Endothelial cell of umbilical vein (primary cell): ENCODE measurements at regions of chr17 and their contacts with region 1.

Region 1: DNA sequence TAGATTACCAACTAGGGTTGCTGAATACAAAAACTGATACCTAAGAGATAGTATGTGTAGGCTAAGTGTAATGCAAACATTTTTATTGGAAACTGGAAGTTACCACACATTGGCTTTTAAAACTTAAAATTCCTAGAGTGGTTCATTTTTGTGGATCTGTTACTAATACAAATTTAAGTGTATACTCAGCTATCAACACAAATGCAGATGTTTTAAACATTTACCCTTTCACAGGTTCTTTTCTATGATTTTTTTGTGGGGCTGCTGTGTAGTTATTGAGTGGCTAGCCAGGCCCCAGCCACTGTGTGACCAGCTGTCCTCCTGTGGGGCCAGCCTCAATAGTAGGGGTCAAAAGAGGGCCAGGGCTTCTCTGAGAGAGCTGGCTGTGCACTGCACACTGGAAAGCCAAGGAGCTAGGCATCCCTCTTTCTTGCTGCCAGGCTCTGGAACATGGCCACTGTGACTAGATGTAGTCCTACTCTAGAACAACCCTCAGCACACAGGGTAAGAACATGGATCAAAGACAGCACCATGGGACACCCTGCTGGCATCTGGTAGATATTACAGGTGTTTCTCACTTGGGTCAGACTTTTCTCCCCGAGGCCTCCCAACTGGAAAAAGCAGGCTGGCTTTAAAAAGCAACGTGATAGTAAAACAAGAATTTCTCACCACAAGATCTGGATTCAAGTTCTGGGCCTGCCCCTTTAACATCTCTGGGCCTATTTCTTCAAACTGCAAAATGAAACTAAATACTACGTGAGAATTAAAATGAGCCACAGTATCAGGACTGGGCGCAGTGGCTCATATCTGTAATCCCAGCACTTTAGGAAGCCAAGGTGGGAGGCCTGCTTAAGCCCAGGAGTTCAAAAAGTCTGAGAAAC is 7.3 kb upstream of the VEZF1 start:
- DNase-seq: peak; percentile 82
- H3K4me3 ChIP-seq: no peak overlapping the region
- H3K27ac ChIP-seq: no peak overlapping the region
- H3K4me1 ChIP-seq: peaks cover 20% of the 10 kb centered on the region
- H3K27me3 ChIP-seq: no peaks in the 10 kb centered on the region
- CTCF ChIP-seq: peak; percentile 71 to 72
- POLR2A ChIP-seq: no peak

Region 2: GRCh38 chr17:57255776-57256681 is 739.3 kb before region 1 on chr17 and contains the start of gene MSI2:
- CTCF ChIA-PET with region 1: no interaction called
- POLR2A ChIA-PET with region 1: no interaction called
- dilution Hi-C with region 1: no loop called
- intact Hi-C with region 1: loop called (anchors 5 kb)
- DNase-seq: peak; percentile 59
- H3K4me3 ChIP-seq: peak within 1 kb of the TSS; percentile 85 to 99 (median 97)
- H3K27ac ChIP-seq: peak within 1 kb of the TSS; percentile 21
- H3K4me1 ChIP-seq: peaks cover 12% of the 10 kb centered on the region
- H3K27me3 ChIP-seq: peaks cover 0 to 2% of the 10 kb centered on the region in 2 experiments
- CTCF ChIP-seq: no peak
- POLR2A ChIP-seq: no peak
- total RNA-seq, gene MSI2: 59.3 and 62.7 TPM in 2 replicates

Region 3: DNA sequence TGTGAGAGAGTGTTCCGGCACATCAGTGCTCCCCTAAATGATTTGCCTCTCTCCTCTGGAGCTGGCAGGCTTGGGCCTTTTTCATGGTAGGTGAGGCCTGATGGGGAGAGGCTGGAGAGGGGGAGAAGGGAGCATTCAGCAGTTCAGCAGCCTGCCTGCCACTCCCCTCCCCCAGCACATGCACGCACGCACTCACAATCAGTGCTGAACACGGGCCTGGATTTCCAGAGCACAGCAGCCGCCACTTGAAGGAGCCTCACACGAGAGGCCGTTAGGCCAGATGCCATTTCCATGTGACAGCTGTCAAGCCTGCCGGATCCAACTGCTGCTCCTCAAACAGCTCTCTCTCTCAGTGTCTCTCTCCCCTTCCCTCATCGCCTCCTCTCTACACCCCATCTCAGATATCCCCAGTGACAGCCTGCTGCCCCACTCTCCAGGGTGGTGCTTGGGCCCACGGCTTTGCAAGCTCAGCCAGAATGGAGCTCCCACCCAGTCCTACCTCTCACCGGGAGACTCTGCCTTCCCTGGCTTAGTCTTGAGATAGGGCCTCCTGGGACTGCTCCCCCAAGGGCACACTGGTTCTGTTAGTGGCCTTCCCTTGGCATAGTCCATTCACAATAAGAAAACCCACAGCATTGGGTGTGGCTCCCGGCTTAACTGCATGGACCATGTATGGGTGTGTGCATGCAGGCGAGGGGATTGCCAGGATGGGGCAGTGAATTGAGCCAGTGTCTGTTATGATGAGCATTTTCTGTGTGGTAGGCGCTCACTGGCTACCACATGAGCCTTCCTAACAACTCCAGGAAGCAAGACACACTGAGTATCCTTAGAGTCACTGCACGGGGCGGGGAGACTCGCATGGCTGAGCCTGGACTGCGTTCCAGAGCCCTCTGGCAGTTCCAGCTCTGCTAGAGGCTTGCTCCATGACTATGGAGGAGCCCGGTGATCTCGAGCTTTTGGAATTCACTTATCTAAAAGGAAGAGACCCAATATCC is 476.4 kb before region 1 on chr17:
- CTCF ChIA-PET with region 1: no interaction called
- POLR2A ChIA-PET with region 1: no interaction called
- dilution Hi-C with region 1: no loop called
- intact Hi-C with region 1: no loop called
- DNase-seq: no peak
- H3K4me3 ChIP-seq: no peak overlapping the region
- H3K27ac ChIP-seq: no peak overlapping the region
- H3K4me1 ChIP-seq: no peaks in the 10 kb centered on the region
- H3K27me3 ChIP-seq: no peaks in the 10 kb centered on the region
- CTCF ChIP-seq: no peak
- POLR2A ChIP-seq: no peak

Region 4: GRCh38 chr17:57833179-57833939 is 162.0 kb before region 1 on chr17:
- CTCF ChIA-PET with region 1: interaction called, 23 read pairs
- POLR2A ChIA-PET with region 1: no interaction called
- dilution Hi-C with region 1: no loop called
- intact Hi-C with region 1: no loop called
- DNase-seq: peak; percentile 72
- H3K4me3 ChIP-seq: peak overlapping the region in 2 of 3 experiments; percentile 23 to 54
- H3K27ac ChIP-seq: no peak overlapping the region
- H3K4me1 ChIP-seq: no peaks in the 10 kb centered on the region
- H3K27me3 ChIP-seq: no peaks in the 10 kb centered on the region
- CTCF ChIP-seq: peak; percentile 83 to 96
- POLR2A ChIP-seq: no peak

Region 5: DNA sequence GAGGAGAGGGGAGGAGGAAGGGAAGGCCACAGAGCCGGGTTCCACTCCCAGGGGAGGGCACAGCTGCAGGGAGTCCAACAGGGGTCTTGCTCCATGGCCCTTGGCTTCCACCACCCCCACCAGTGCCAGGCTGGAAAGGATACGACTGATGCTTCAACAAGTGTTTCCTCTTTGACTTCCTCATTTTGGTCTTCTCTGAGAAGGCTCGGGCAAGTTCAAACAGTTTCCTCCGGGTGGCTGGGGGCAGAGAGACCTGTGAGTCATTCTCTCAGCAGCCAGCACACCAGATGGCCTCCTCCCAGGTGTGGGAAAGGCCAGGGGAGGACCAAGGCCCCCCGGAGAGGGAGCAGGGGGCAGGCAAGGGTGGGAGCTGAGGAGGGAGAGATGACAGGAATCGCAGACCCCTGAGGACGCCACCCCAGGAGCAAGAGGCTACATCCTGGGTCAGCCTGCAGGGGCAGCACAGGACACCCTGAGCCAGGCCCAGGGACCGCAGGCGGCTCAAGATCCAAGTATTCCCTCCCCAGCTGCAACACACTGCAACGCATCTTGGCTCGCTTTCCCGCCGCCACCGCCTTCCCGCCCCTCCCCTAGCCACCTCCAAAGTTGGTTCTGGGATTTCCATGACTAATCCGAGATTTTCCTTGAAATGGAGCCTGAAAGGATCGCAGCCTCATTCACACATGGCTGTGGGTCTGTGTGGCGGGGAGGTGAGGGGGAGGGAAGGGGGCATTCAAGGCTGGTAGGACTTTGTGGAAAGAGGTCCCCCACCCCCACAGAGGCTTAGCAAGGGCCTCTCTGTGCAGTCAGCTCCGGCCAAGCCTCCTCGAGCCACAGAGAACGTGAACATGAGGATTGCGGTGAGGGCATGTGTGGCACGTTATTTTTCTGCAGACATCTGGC is 127.1 kb before region 1 on chr17:
- CTCF ChIA-PET with region 1: interaction called, 584 read pairs
- POLR2A ChIA-PET with region 1: interaction called, 6 read pairs
- dilution Hi-C with region 1: loop called (anchors 25 kb)
- intact Hi-C with region 1: no loop called
- DNase-seq: peak; percentile 91
- H3K4me3 ChIP-seq: no peak overlapping the region
- H3K27ac ChIP-seq: peak overlapping the region; percentile 44
- H3K4me1 ChIP-seq: peaks cover 35% of the 10 kb centered on the region
- H3K27me3 ChIP-seq: no peaks in the 10 kb centered on the region
- CTCF ChIP-seq: peak in 1 of 2 donors; percentile 53
- POLR2A ChIP-seq: no peak

Region 6: GRCh38 chr17:57902800-57903759 is 92.2 kb before region 1 on chr17:
- CTCF ChIA-PET with region 1: interaction called, 10 read pairs
- POLR2A ChIA-PET with region 1: no interaction called
- dilution Hi-C with region 1: no loop called
- intact Hi-C with region 1: no loop called
- DNase-seq: peak; percentile 80
- H3K4me3 ChIP-seq: no peak overlapping the region
- H3K27ac ChIP-seq: peak overlapping the region; percentile 71
- H3K4me1 ChIP-seq: peaks cover 19% of the 10 kb centered on the region
- H3K27me3 ChIP-seq: no peaks in the 10 kb centered on the region
- CTCF ChIP-seq: no peak
- POLR2A ChIP-seq: no peak

Region 7: GRCh38 chr17:57980522-57980921 is 14.8 kb before region 1 on chr17:
- CTCF ChIA-PET with region 1: interaction called, 22 read pairs
- POLR2A ChIA-PET with region 1: no interaction called
- dilution Hi-C with region 1: no loop called
- intact Hi-C with region 1: no loop called
- DNase-seq: no peak
- H3K4me3 ChIP-seq: no peak overlapping the region
- H3K27ac ChIP-seq: no peak overlapping the region
- H3K4me1 ChIP-seq: peaks cover 10% of the 10 kb centered on the region
- H3K27me3 ChIP-seq: no peaks in the 10 kb centered on the region
- CTCF ChIP-seq: no peak
- POLR2A ChIP-seq: no peak

Region 8: GRCh38 chr17:58032691-58033415 is 37.5 kb after region 1 on chr17:
- CTCF ChIA-PET with region 1: no interaction called
- POLR2A ChIA-PET with region 1: no interaction called
- dilution Hi-C with region 1: no loop called
- intact Hi-C with region 1: no loop called
- DNase-seq: no peak
- H3K4me3 ChIP-seq: no peak overlapping the region
- H3K27ac ChIP-seq: no peak overlapping the region
- H3K4me1 ChIP-seq: no peaks in the 10 kb centered on the region
- H3K27me3 ChIP-seq: peaks cover 2 to 6% of the 10 kb centered on the region in 2 experiments
- CTCF ChIP-seq: no peak
- POLR2A ChIP-seq: no peak

Region 9: GRCh38 chr17:58210922-58211321 is 215.6 kb after region 1 on chr17:
- CTCF ChIA-PET with region 1: no interaction called
- POLR2A ChIA-PET with region 1: no interaction called
- dilution Hi-C with region 1: no loop called
- intact Hi-C with region 1: no loop called
- DNase-seq: no peak
- H3K4me3 ChIP-seq: no peak overlapping the region
- H3K27ac ChIP-seq: no peak overlapping the region
- H3K4me1 ChIP-seq: no peaks in the 10 kb centered on the region
- H3K27me3 ChIP-seq: no peaks in the 10 kb centered on the region
- CTCF ChIP-seq: peak in 1 of 2 donors; percentile 1
- POLR2A ChIP-seq: no peak